A673 (cell line): ENCODE measurements at regions of chr2 and their contacts with region 1.

Region 1: DNA sequence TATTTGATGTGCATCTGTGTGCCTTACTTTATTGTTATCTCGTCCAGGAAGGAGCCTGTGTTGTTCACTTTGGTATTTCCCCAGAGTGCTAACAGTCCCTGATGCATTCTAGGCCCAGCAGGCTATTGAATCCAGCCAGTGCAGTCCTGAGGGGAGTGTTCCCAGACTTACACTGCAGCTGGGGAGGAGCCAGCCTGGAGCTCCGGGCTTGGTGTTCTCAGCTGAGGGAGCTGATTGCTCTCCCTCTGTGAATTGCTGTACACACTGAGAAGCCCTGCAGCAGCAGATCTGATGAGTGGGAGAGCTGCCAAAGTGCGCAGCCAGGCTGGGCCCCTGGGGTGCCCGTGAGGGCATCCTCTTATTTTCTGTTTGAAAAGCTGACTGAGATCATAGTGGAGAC is 159.2 kb downstream of the GALNT3 start:
- DNase-seq: peak; percentile 99
- H3K4me3 ChIP-seq: peak overlapping the region; percentile 15
- H3K27ac ChIP-seq: peak overlapping the region; percentile 75
- H3K4me1 ChIP-seq: peaks cover 87% of the 10 kb centered on the region
- H3K27me3 ChIP-seq: no peaks in the 10 kb centered on the region
- CTCF ChIP-seq: no peak

Region 2: DNA sequence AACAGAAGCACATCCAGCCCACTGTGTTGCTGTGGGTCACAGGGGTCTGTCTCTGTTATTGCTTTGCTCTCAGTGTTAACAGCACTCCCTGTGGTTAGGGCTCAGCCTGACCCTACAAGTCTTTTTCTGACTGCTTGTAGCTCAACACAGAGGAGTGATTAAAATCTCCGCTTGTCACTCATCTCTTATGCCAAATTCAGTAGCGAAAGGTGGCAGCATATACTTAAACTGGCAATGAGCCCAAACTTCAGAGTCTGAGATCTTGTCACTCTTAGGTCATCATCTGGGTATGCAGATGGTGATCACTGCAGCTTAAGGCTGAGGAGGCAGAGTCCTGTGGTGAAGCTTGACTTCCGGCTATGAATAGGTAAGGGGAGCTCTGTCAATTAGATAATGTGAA is 228.7 kb before region 1 on chr2:
- CTCF ChIA-PET with region 1: no interaction called
- POLR2A ChIA-PET with region 1: no interaction called
- intact Hi-C with region 1: no loop called
- DNase-seq: peak; percentile 92
- H3K4me3 ChIP-seq: no peak overlapping the region
- H3K27ac ChIP-seq: peak overlapping the region; percentile 56
- H3K4me1 ChIP-seq: peaks cover 83% of the 10 kb centered on the region
- H3K27me3 ChIP-seq: no peaks in the 10 kb centered on the region
- CTCF ChIP-seq: peak; percentile 20; the same call in 1 of the 2 replicates

Region 3: GRCh38 chr2:165462443-165462842 is 172.4 kb before region 1 on chr2:
- CTCF ChIA-PET with region 1: no interaction called
- POLR2A ChIA-PET with region 1: no interaction called
- intact Hi-C with region 1: loop called (anchors 5 kb)
- DNase-seq: peak; percentile 98
- H3K4me3 ChIP-seq: peak overlapping the region; percentile 20
- H3K27ac ChIP-seq: peak overlapping the region; percentile 71
- H3K4me1 ChIP-seq: peaks cover 26% of the 10 kb centered on the region
- H3K27me3 ChIP-seq: no peaks in the 10 kb centered on the region
- CTCF ChIP-seq: no peak

Region 4: GRCh38 chr2:165698444-165698894 is 63.6 kb after region 1 on chr2:
- CTCF ChIA-PET with region 1: no interaction called
- POLR2A ChIA-PET with region 1: no interaction called
- intact Hi-C with region 1: no loop called
- DNase-seq: peak; percentile 85
- H3K4me3 ChIP-seq: no peak overlapping the region
- H3K27ac ChIP-seq: peak overlapping the region; percentile 6
- H3K4me1 ChIP-seq: peaks cover 23% of the 10 kb centered on the region
- H3K27me3 ChIP-seq: no peaks in the 10 kb centered on the region
- CTCF ChIP-seq: peak; percentile 71